ENCODE measurements at regions of chr15 and their contacts with region 1.

Region 1: GRCh38 chr15:77024271-77025082 is 29.6 kb downstream of the PSTPIP1 start:
- DNase-seq: peak; percentile 40
- H3K4me3 ChIP-seq: no peak overlapping the region
- H3K27ac ChIP-seq: no peak overlapping the region
- H3K4me1 ChIP-seq: peaks cover 11% of the 10 kb centered on the region
- H3K27me3 ChIP-seq: no peaks in the 10 kb centered on the region
- CTCF ChIP-seq: peak; percentile 91
- POLR2A ChIP-seq: no peak

Region 2: GRCh38 chr15:76514292-76514691 is 510.2 kb before region 1 on chr15:
- CTCF ChIA-PET with region 1: no interaction called
- POLR2A ChIA-PET with region 1: no interaction called
- dilution Hi-C with region 1: no loop called
- intact Hi-C with region 1: no loop called
- DNase-seq: no peak
- H3K4me3 ChIP-seq: no peak overlapping the region
- H3K27ac ChIP-seq: no peak overlapping the region
- H3K4me1 ChIP-seq: no peaks in the 10 kb centered on the region
- H3K27me3 ChIP-seq: no peaks in the 10 kb centered on the region
- CTCF ChIP-seq: no peak
- POLR2A ChIP-seq: no peak

Region 3: DNA sequence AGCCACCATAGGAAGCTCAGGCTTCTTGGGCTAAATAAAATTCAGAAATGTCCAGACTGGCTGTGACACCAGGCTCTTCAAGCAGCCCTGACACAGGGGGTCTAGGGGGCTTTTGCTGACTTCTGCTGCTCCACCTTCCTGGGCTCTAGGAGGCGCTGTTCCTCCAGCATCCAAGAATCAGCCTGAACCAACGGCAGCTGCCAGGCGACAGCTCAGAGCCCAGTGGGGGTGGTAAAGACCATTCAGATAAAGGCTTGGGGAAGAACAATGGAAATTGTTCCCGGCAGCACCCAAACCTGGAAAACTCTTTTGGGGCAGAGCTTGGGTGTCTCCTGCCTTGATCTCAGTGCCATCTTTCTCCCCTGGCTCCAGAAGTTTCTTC is 51.1 kb before region 1 on chr15:
- CTCF ChIA-PET with region 1: interaction called, 18 read pairs
- POLR2A ChIA-PET with region 1: no interaction called
- dilution Hi-C with region 1: no loop called
- intact Hi-C with region 1: loop called (anchors 1 kb)
- DNase-seq: peak; percentile 56
- H3K4me3 ChIP-seq: no peak overlapping the region
- H3K27ac ChIP-seq: no peak overlapping the region
- H3K4me1 ChIP-seq: peaks cover 11% of the 10 kb centered on the region
- H3K27me3 ChIP-seq: peaks cover 0 to 2% of the 10 kb centered on the region in 2 experiments
- CTCF ChIP-seq: peak; percentile 78
- POLR2A ChIP-seq: no peak

Region 4: DNA sequence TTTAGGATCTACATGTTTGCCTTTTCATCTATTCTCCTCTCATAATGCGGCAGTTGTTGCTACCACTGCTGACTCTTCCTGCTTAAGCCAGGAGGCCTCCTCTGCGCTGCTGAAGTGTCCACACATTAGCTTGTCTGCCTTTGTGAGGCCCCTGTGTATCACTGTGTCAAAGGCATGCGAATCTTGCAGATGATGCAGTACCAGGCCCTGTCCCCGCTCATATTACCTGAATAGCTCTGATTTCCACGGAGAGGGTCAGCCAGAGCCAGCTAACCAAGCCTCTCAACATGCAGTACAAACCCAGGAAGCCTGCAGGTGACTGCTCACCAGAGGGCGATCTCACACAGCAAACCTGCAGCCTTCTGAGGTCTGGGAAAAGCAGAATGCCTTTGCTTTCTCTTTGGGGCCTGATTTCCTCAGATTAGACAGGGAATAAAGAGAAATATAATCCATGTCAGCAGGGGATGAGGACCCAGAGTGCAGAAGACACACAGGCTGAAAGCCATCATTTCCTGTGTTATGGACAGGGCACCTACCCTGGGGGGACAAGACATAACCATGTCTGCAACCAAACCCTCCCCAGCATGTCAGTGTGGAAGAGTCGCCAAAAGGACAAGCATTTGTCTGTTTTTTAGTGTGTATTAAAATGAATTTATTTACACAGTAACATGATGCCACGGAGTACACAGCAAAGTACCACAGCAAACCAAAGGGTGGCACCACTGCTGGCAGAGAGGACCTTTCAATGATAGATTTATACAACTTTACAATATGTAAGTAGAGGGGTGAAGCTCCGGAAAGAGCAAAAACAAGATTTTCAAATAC is 83.3 kb after region 1 on chr15:
- CTCF ChIA-PET with region 1: interaction called, 4 read pairs
- POLR2A ChIA-PET with region 1: no interaction called
- dilution Hi-C with region 1: no loop called
- intact Hi-C with region 1: loop called (anchors 2 kb)
- DNase-seq: peak; percentile 53
- H3K4me3 ChIP-seq: no peak overlapping the region
- H3K27ac ChIP-seq: no peak overlapping the region
- H3K4me1 ChIP-seq: peaks cover 3% of the 10 kb centered on the region
- H3K27me3 ChIP-seq: no peaks in the 10 kb centered on the region
- CTCF ChIP-seq: peak; percentile 61 to 78
- POLR2A ChIP-seq: no peak

Region 5: DNA sequence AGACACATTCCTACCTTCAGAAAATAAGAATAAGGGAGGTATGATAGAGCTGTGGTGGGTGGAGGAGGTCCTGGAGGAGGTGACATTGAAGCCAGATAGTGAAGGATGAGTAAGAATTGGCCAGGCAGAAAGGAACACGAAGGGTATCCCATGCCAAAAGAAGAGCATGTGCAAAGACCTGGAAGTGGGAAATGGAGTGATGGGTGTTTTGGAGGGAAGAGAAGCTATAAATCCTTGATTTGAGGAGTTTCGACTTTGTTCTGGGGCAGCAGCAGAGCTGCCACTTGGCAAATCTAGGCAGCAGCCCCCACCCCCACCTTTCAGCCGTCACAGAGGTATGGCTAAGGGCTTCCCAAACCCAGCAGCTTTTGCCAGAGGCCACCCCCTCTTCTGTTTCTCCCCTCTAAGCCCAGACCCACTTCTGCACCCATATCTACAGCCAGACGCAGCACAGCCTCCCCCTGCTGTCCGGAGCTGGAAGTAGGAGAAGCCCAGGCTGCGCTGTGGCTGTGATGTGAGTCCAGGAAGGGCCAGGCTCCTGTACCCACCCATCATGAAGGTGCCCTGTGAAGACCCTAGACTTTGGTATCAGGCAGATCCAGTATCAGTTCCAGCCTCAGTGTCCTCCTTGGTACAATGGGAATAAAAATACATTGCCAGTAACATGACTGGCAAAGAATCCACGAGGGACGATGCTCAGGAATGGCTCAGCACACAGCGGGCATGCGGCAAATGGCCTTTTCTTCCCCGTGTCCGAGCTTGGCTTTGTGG is 796.9 kb after region 1 on chr15:
- CTCF ChIA-PET with region 1: interaction called, 7 read pairs
- POLR2A ChIA-PET with region 1: no interaction called
- dilution Hi-C with region 1: no loop called
- intact Hi-C with region 1: loop called (anchors 5 kb)
- DNase-seq: peak; percentile 55
- H3K4me3 ChIP-seq: no peak overlapping the region
- H3K27ac ChIP-seq: no peak overlapping the region
- H3K4me1 ChIP-seq: no peaks in the 10 kb centered on the region
- H3K27me3 ChIP-seq: peaks cover 37 to 42% of the 10 kb centered on the region in 2 experiments
- CTCF ChIP-seq: peak; percentile 59 to 88
- POLR2A ChIP-seq: no peak

Measured in endothelial cell of umbilical vein (primary cell).